Right cardiac atrium (tissue), 5 donors: ENCODE measurements at regions of chr3 and their contacts with region 1.

Region 1: GRCh38 chr3:173553635-173554280 is 156.2 kb downstream of the NLGN1 start:
- DNase-seq: peak in 1 of 3 donors; percentile 19
- ATAC-seq: no peak
- H3K4me3 ChIP-seq: no peak overlapping the region
- H3K27ac ChIP-seq: no peak overlapping the region
- H3K4me1 ChIP-seq: no peaks in the 10 kb centered on the region
- H3K27me3 ChIP-seq: no peaks in the 10 kb centered on the region

Region 2: DNA sequence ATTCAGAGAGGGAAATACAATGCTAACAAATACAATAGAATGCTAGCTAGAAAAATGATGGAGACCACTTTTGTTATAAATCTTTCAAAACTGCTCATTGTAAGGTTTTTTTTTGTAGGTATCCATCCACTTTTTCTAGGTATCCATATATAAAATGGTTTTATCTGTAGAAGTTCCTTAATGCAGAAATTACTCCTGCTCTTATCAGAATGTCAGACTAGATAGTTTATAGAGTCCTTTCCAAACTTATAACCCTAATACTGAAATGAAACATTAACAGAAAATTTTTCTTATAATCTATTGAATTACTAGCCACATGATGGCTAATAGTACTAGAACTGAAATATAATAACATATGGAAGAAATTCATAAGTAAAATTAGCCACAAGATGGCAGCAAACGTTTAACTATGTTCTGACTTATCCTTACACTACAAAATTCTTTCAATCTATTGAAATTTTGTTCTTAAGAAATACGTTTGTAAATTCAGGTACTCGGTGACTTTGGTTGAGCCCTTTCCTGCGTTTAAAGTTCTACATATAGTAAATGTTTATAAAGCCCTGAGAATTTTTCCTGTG is 744.7 kb before region 1 on chr3:
- intact Hi-C with region 1: loop called in 3 of 4 experiments (anchors 5 to 10 kb)
- DNase-seq: no peak
- ATAC-seq: no peak
- H3K4me3 ChIP-seq: no peak overlapping the region
- H3K27ac ChIP-seq: no peak overlapping the region
- H3K4me1 ChIP-seq: no peaks in the 10 kb centered on the region
- H3K27me3 ChIP-seq: no peaks in the 10 kb centered on the region

Region 3: DNA sequence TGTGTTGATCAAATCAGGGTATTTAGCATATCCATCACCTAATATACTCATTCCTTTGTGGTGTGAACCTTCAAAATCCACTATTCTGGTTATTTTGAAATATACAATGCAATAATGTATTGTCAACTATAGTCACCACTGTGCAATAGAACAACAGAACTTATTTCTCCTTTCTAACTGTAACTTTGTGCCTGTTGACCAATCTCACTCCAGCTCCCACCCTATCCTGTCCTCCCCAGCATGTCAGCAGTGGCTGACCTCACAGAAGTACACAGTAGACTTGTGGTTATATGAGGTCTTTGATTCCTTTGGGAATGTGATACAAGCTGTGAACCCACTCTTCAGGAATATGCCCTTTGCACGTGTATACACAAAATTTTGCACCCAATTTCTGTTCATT is 739.0 kb before region 1 on chr3:
- intact Hi-C with region 1: loop called in 3 of 4 experiments (anchors 5 to 10 kb)
- DNase-seq: no peak
- ATAC-seq: no peak
- H3K4me3 ChIP-seq: no peak overlapping the region
- H3K27ac ChIP-seq: no peak overlapping the region
- H3K4me1 ChIP-seq: no peaks in the 10 kb centered on the region
- H3K27me3 ChIP-seq: no peaks in the 10 kb centered on the region

Region 4: DNA sequence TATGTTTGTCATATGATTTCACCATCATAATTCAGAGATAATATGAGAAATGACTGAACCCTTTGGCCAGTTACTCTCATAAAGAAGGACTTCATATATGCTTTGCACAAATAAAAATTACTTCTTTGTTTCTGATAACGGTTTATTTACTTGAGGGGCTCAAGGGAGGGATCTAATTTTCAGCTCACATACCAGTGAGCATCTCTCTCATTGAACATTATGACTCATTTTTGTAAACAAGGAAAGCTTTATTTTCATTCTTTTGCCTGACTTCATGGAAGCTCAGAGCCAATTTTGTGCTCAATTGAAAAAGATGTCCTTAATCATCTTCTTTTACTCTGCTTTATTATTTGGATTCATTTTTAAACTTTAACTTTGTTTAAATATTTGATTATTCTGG is 150.4 kb before region 1 on chr3:
- intact Hi-C with region 1: loop called in 1 of 4 experiments (anchors 10 kb)
- DNase-seq: no peak
- ATAC-seq: no peak
- H3K4me3 ChIP-seq: no peak overlapping the region
- H3K27ac ChIP-seq: no peak overlapping the region
- H3K4me1 ChIP-seq: no peaks in the 10 kb centered on the region
- H3K27me3 ChIP-seq: no peaks in the 10 kb centered on the region

Region 5: GRCh38 chr3:173467501-173467900 is 86.3 kb before region 1 on chr3:
- intact Hi-C with region 1: no loop called
- DNase-seq: no peak
- ATAC-seq: no peak
- H3K4me3 ChIP-seq: no peak overlapping the region
- H3K27ac ChIP-seq: no peak overlapping the region
- H3K4me1 ChIP-seq: no peaks in the 10 kb centered on the region
- H3K27me3 ChIP-seq: no peaks in the 10 kb centered on the region